WTC11 (cell line): ENCODE measurements at regions of chr2 and their contacts with region 1.

Region 1: DNA sequence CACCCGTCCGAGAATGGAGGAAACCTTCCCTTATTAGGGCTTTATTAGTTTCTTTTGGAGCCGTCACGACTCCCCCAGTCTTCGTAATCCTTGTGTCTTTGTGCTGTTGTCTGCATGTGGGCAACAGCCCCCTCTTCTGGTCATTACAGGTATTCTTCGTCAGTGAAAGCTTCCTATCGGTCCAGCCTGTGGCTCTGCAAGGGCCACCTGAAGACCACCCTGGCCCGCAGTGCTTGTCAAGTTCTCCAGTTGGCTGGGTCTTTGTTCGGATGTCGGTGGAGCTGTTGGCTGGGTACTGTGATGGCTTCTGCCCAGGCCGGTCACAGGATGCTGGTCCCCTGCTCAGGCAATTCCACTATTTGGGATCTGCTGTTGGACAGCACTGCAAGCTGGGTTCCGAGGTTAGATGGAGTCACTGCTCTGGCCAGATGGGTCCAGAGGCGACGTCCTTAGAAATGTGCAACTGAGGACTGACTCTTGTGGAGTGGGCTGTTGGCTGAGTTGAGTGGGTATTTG is 19.2 kb downstream of the E2F6 start:
- DNase-seq: peak; percentile 73
- ATAC-seq: peak; percentile 98
- H3K4me3 Mint-ChIP-seq: no peak overlapping the region
- H3K27ac Mint-ChIP-seq: no peak overlapping the region
- H3K4me1 Mint-ChIP-seq: no peaks in the 10 kb centered on the region
- H3K27me3 Mint-ChIP-seq: no peaks in the 10 kb centered on the region
- CTCF ChIP-seq: peak; percentile 83

Region 2: GRCh38 chr2:11465497-11466406 is 19.0 kb after region 1 on chr2 and contains the start of gene E2F6:
- CTCF ChIA-PET with region 1: interaction called, 15 read pairs
- POLR2A ChIA-PET with region 1: interaction called, 7 read pairs
- DNase-seq: peak; percentile 93
- ATAC-seq: peak; percentile 90
- H3K4me3 Mint-ChIP-seq: peak within 1 kb of the TSS; percentile 66
- H3K27ac Mint-ChIP-seq: no peak within 1 kb of the TSS
- H3K4me1 Mint-ChIP-seq: peaks cover 20% of the 10 kb centered on the region
- H3K27me3 Mint-ChIP-seq: peaks cover 23% of the 10 kb centered on the region
- CTCF ChIP-seq: no peak
- total RNA-seq, gene E2F6: 14.2 to 16.0 TPM (median 14.4 TPM) in 3 replicates